Cardiac septum (tissue), 1 donor: ENCODE measurements at regions of chr7 and their contacts with region 1.

Region 1: DNA sequence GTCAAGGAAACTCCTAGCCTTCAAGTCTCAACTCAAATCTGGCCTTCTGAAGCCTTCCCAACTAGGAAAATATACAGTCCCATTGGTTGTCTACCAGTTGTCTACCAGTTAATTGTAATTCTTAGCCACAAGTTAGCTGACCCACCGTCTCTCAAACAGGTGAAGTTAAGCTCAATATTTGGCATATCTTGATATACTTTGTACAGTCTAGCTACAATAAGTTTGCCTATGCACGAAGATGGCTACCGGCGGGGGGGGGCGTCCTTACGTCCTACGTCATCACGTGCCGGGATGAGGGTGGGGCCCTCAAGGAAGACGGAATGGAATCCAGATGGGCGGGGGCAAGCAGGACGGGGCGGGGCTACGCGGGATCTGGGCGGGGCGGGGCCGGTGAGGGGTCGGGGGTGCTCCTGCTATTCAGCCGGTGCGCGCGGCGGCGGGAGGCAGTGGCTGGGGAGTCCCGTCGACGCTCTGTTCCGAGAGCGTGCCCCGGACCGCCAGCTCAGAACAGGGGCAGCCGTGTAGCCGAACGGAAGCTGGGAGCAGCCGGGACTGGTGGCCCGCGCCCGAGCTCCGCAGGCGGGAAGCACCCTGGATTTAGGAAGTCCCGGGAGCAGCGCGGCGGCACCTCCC is at the start of gene AHR:
- DNase-seq: peak; percentile 95
- total RNA-seq, gene AHR: 44.1 TPM

Region 2: DNA sequence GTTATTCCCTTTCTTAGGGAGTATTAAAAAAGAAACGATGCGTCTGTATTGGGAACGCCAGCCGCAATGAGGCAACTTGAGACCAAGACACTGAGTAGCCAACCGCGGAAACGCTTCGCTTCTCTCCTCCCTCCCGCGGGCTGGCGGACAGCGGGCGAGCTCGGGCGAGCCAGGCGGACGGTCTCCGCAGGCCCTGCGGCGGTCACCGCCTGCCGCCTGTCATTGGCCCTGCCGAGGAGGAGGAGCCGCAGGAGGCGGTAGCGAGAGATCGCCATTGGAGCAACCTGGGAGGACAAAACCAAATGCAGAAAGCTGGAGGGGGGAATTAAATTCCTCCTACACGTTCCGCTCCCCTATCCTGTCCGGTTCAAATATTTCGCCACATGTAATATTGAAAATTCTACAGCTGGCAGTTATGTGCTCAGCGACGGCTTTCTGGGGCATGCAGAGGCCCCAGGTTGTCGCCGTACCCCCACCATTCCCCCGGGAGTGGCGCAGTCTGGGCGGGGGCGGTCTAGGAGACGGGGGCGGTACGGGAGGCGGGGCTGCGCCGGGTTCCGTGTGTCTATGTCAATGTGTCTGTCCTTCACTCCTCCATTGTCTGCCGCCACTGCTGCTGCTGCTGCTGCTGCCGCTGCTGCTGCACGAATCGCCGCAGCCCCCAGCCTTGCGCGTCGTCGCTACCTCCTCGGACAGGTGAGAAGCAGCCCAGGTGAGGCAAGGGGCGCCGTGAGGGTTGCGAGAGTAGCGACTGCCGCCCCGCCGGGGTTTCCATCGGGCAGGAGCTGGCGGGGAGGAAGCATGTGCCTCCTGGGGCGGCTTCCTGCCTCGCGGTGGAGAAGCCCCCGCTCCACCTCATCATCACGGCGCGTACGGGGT is 652.5 kb before region 1 on chr7 and contains the starts of genes ANKMY2 and BZW2:
- intact Hi-C with region 1: loop called (anchors 10 kb)
- DNase-seq: peak; percentile 97
- total RNA-seq, gene ANKMY2: 36.5 TPM
- total RNA-seq, gene BZW2: 285 TPM

Region 3: DNA sequence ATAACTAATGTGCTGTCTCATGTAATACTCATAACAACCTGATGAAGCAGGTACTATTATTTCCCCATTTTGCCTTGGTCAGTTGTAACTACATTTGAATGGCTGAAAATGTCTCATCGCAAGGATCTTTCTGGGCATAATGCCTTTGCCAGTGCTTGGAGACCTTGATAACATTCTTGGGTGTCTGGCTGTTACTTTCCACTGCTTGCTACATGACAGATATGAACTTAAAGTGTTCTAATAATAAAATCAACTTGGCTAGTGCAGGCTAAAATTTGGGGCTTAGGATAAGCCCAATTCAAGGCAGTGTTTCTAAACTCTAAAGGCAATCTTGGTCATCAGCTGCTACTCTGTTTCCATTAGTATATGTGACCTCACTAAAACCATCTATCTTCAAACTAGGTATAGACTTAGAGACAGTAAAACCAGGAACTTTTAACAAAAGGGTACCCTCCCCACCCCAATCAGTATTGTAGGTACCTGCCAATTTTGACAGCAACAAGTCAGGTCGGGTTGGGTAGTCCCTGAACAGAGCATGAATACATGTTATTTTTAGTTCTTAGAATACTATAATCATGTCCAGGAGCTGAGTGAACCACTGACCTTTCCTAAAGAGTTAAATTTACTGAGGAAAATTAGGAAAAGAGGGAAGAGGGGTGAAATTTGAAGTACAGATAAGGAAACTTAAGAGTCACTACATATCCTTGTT is 68.1 kb before region 1 on chr7:
- intact Hi-C with region 1: loop called (anchors 2 kb)
- DNase-seq: no peak

Region 4: DNA sequence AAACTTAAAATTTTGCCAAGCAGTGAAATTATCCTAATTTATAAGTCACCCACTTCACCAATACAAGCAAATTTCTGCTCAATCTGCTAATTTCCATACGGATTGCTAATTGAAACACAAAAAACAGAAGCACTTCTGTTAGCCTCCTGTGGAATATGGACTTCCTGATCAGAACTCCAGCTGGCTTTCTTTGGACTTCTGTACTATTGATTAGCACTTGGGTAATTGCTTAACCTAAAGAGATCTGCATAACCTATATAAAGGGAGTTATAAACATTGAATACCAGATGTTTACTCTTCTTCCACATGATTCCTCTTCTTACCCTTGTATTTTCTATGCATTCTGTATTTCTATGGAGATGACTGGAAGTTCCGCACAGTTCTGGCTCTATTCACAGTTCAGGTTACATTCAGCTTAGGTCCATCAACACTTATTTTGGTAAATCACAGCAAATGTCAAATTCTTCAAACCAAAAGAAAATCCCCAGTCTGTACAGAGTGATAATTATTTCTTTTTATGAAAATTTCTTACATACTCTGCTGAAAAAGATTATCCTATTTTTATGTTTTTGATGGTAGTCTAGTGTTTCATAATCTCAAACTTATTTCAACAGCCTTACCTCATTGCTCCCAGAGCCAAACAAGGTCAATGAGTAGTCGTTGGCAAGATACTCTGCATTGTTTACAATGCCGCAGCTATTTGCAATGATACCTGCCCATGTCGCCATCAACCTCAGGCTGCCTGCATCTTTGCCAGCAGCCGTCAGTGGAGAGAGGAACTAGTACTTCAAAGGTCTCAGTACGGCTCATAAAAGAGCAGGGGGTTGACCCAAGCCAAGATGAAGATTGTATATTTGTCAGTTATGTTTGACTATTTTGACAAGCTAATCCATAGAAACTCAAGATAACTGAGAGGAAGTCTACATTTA is 225.8 kb after region 1 on chr7:
- intact Hi-C with region 1: loop called (anchors 5 kb)
- DNase-seq: no peak

Region 5: GRCh38 chr7:17640730-17641377 is 342.5 kb after region 1 on chr7:
- intact Hi-C with region 1: loop called (anchors 10 kb)
- DNase-seq: no peak